ENCODE measurements at regions of chr20 and their contacts with region 1.

Region 1: DNA sequence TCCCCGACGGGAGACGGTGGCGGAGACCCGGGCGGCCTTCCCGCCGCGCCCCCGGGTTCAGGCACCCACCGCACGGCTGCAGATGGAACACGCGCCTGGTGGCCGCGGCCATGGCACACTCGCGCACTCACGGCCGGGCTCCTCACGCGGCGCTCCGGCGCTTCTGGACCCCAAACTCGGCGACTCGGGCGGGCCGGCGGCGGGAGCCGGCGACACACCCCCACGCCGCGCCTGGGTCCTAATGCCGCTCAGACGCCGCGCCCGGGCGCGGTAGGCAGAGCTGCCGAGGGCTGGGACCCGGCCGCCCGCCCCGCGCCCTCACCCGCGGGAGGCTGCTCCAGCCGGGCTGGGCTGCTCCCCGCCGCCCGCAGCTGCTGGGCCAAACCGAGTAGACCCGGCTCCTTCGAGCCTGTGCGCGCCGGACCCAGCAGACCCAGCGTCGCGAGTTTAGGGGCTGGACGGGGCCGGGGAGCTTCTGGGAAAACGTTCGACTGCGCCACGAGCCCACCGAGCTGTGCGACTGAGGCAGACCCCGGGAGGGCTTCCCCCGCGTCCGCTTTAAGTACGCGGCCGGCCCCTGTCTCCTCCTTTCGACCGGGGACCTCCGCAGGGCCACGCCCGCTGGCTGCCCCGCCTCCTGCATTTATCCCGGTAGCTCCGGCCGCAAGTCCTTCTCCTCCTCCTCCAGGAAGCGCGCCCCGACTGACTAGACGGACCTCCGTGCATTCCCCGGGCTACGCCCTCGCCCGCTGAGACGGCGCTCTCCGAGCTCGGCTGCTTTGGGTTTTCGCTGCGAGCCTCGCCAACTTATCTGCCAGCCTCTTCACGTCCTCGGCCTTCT is at the start of gene SLC4A11:
- DNase-seq: peak; percentile 45
- ATAC-seq: peak; percentile 72
- H3K4me3 Mint-ChIP-seq: peak within 1 kb of the TSS; percentile 89
- H3K27ac Mint-ChIP-seq: no peak within 1 kb of the TSS
- H3K4me1 Mint-ChIP-seq: peaks cover 7% of the 10 kb centered on the region
- H3K27me3 Mint-ChIP-seq: peaks cover 48% of the 10 kb centered on the region
- CTCF ChIP-seq: no peak
- total RNA-seq, gene SLC4A11: 0.58 and 0.88 TPM in 2 replicates

Region 2: DNA sequence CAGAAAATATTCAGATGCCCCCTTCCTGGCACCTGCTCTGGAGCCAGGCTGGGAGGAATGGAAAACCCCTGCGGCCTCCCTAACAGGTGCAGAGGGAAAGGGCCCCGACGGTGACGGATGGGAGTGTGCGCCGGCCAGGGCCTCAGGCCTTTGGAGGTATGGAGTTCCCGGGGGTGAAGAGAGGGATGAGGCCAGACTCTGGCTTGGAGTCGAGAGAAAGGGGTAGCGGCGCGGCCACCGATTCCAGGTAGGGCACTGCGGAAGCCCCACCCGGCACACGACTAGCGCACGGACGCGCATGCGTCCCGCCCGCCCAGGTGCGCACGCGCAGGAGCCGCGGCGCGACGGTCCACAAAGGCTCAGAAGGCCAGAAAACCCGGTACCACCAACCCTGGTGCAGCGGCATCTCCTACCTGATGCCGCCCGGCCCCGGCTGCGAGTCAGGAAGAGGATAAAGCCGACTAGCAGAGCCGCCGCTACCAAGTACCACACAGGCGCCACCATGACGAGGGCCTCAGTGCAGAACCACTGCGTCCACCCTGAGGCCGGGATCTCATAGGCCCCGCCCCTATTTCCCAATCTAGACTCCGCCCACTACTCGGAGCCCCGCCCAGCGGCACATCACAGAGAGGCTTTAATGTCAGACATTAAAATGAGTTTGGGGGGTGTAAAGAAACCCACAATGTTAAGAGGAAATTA is 35.0 kb before region 1 on chr20 and contains the start of gene DDRGK1:
- CTCF ChIA-PET with region 1: no interaction called
- POLR2A ChIA-PET with region 1: interaction called, 3 read pairs
- intact Hi-C with region 1: loop called (anchors 2 kb)
- DNase-seq: peak; percentile 93
- ATAC-seq: peak; percentile 93
- H3K4me3 Mint-ChIP-seq: peak within 1 kb of the TSS; percentile 97
- H3K27ac Mint-ChIP-seq: peak within 1 kb of the TSS; percentile 94
- H3K4me1 Mint-ChIP-seq: peaks cover 22% of the 10 kb centered on the region
- H3K27me3 Mint-ChIP-seq: no peaks in the 10 kb centered on the region
- CTCF ChIP-seq: no peak
- total RNA-seq, gene DDRGK1: 37.1 and 46.1 TPM in 2 replicates

Region 3: DNA sequence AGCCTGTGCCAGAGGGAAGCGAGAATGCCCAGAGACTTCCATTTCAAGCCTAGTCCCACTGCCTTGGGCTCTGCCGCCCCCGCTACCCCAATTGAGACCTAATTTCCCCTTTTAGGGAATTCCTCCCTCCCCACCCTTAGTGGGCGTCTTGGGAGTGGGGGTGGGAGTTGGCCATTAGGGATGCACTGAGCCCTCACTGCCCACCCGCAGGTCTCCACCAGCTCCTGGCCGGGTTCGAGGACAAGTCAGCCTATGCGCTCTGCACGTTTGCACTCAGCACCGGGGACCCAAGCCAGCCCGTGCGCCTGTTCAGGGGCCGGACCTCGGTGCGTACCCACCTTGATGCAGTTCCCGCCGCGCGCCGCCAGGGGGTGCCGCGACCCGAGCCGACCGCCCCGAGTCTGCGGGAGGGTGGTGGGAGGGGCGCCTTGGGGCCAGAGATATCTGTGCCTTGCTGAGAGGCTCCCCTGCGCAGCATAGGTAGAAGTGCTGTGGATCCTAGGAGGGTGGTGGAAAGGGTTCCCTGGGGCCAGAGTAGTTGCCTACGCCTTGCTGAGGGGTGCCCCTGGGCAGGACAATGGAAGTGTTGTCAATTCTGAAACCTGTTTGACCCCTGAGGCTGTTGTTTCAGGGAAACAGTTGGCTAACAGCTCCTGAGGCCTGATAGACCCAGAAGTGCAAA is 20.8 kb before region 1 on chr20:
- CTCF ChIA-PET with region 1: interaction called, 3 read pairs
- POLR2A ChIA-PET with region 1: interaction called, 6 read pairs
- intact Hi-C with region 1: loop called (anchors 2 kb)
- DNase-seq: peak; percentile 69
- ATAC-seq: peak; percentile 86
- H3K4me3 Mint-ChIP-seq: no peak overlapping the region
- H3K27ac Mint-ChIP-seq: no peak overlapping the region
- H3K4me1 Mint-ChIP-seq: peaks cover 22% of the 10 kb centered on the region
- H3K27me3 Mint-ChIP-seq: no peaks in the 10 kb centered on the region
- CTCF ChIP-seq: no peak